ENCODE measurements at regions of chrX and their contacts with region 1.

Region 1: DNA sequence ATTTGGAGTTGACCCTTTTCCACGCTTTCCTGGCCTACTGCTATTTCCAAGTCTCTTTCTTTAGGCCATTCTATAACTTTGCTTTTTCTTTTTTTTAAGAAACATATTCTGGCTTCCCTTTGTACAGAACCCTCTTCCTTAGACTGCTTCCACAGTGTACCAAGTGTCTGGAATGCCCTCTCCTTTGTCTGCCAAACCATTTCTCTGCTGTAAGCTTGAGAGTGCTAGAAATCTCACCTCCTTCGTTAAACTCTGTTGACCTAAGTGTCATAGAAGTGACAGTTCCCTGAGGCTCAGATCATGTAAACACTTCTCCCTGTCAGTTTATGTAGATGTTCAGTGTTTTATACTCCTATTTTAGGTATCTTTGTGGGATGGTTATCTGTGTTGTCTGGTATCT is 108.4 kb downstream of the EDA start:
- DNase-seq: no peak
- ATAC-seq: no peak
- H3K4me3 ChIP-seq: no peak overlapping the region
- H3K27ac ChIP-seq: no peak overlapping the region
- H3K4me1 ChIP-seq: no peaks in the 10 kb centered on the region
- H3K27me3 ChIP-seq: no peaks in the 10 kb centered on the region
- CTCF ChIP-seq: no peak
- POLR2A ChIP-seq: no peak

Region 2: DNA sequence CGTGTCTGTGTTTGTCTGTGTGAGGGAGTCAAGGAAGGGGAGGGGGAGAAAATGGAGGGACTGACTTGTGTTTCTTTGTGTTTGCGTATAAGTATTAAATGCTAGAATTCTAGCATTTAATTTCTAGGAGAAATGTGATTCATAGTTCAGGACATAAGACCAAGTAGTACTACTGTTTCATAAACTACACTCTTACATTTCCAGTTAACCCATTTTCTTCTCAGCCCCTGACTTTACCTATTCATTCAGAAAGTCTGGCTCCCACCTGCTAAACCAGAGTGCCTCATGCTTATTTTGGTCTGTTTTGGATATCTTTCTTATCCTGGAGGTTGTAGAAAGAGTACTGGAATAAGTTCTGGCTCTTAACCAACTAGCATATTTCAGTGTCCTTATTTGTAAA is 94.2 kb before region 1 on chrX:
- intact Hi-C with region 1: loop called in 1 of 10 experiments (anchors 10 kb)
- DNase-seq: no peak
- ATAC-seq: no peak
- H3K4me3 ChIP-seq: no peak overlapping the region
- H3K27ac ChIP-seq: no peak overlapping the region
- H3K4me1 ChIP-seq: no peaks in the 10 kb centered on the region
- H3K27me3 ChIP-seq: peaks cover 0 to 3% (median 0%) of the 10 kb centered on the region in 9 donors
- CTCF ChIP-seq: no peak
- POLR2A ChIP-seq: no peak

Region 3: GRCh38 chrX:69705818-69706217 is 18.5 kb before region 1 on chrX:
- intact Hi-C with region 1: no loop called
- DNase-seq: no peak
- ATAC-seq: no peak
- H3K4me3 ChIP-seq: no peak overlapping the region
- H3K27ac ChIP-seq: no peak overlapping the region
- H3K4me1 ChIP-seq: no peaks in the 10 kb centered on the region
- H3K27me3 ChIP-seq: no peaks in the 10 kb centered on the region
- CTCF ChIP-seq: no peak
- POLR2A ChIP-seq: no peak